Right lobe of liver (tissue), 6 donors: ENCODE measurements at regions of chr1 and their contacts with region 1.

Region 1: DNA sequence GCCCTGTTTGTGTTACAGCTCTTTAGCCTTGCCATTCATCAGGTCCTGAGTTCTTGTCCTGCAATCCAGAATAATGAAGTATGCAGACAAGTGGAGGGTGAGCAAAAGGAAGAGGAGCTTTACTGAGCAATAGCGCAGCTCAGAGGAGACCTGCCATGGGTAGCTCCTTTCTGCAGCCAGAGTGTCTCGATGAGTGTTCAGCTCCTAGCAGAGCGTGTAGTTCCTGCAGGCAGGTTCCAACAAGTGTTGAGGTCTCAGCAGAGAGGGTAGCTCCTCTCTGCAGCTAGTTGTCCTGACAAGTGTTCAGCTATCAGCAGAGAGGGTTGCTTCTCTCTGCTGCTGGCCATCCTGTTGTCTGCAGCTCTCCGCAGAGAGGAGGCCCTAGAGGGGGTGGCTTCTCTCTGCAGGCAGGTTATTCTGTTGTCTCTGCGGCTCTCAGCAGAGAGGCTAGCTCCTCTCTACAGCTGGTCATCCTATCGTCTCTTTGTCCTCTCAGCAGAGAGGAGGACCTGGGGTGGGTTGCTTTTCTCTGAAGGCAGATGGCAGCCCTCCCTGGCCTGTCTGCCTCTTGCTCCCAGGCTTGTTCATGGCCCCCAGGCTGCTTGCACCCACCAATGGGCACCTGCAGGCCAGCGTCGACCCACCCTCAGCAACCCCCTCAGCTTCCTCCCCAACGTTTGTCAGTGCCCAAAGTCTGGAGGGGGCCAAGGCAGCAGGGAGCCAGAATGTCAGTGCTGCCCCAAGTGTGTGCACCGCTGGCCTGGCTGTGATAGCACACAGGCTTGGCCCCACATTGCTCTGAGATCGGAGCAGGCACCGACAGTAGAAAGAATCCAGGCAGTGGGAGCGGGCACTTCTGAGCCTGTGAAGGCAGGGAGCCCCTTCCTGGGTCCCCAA is 112.5 kb upstream of the RUNX3 start:
- DNase-seq: no peak
- ATAC-seq: no peak
- H3K4me3 ChIP-seq: no peak overlapping the region
- H3K27ac ChIP-seq: no peak overlapping the region
- H3K4me1 ChIP-seq: no peaks in the 10 kb centered on the region
- H3K27me3 ChIP-seq: no peaks in the 10 kb centered on the region
- CTCF ChIP-seq: no peak
- POLR2A ChIP-seq: no peak

Region 2: DNA sequence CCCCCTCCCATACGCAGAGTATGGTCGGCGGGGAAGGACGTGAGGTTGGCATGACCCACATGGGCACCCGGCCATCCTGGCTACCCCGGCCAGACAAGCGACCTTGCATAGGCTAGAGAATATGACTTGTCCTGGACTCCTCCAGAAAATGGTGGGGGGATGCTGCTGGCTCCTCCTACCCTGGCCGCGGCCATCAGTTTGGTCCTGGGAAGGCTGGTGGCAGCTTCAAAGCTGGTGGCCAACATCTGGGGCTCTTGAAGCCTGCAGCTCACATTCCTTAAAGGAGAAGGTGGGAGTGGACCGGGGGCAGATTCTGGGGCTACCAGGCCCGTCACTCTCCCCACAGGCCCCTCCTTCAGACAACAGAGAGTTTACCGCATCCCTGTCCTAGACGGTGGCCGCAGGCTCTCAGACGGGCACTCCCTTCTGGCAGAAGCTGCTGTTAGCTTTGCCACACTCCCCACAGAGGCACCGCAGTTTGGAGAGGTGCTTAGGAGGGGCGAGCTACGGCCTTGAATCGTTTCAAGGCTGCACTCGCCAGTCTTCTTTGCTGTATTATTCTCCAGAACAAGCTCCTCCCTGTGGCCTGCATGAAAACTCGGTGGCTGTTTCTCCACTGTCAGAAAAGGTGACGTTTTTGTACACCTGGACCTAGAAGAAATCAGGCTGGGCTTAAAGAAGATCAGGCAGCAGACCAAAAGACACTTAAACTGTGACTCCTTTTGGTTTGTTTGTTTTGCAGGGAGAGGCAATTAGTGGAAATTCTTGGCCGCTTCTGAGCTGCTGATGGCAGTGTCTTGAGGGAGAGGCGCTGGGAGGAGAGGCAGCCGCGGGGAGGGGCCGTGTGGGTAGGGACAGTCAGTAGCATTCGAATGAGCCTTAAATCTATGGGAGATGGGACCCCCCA is 180.5 kb before region 1 on chr1:
- intact Hi-C with region 1: loop called in 1 of 2 experiments (anchors 10 kb)
- DNase-seq: no peak
- ATAC-seq: no peak
- H3K4me3 ChIP-seq: no peak overlapping the region
- H3K27ac ChIP-seq: no peak overlapping the region
- H3K4me1 ChIP-seq: no peaks in the 10 kb centered on the region
- H3K27me3 ChIP-seq: no peaks in the 10 kb centered on the region
- CTCF ChIP-seq: no peak
- POLR2A ChIP-seq: no peak